Panc1 (cell line): ENCODE measurements at regions of chr11 and their contacts with region 1.

Region 1: DNA sequence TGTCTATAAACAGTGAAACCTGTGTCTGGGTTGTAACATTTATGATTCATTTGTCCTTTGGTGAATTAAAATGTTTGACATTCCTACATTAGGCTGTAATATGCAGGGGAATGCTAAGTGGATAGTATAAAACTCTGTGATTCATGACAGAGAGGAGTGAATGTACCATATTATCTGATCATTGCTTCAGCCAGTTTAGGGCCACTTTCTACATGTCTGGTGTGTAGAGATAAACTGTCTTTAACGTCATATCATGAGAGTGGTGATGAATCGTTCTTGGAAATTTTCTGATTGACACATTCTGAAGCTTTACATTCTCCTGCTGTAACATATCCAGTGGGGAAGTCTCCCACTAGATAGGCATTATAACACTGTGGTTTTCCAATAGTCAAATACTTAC is 427.7 kb downstream of the JRKL start:
- DNase-seq: no peak
- ATAC-seq: no peak
- H3K4me3 ChIP-seq: no peak overlapping the region
- H3K27ac ChIP-seq: no peak overlapping the region
- H3K4me1 ChIP-seq: no peaks in the 10 kb centered on the region
- H3K27me3 ChIP-seq: no peaks in the 10 kb centered on the region
- CTCF ChIP-seq: no peak

Region 2: DNA sequence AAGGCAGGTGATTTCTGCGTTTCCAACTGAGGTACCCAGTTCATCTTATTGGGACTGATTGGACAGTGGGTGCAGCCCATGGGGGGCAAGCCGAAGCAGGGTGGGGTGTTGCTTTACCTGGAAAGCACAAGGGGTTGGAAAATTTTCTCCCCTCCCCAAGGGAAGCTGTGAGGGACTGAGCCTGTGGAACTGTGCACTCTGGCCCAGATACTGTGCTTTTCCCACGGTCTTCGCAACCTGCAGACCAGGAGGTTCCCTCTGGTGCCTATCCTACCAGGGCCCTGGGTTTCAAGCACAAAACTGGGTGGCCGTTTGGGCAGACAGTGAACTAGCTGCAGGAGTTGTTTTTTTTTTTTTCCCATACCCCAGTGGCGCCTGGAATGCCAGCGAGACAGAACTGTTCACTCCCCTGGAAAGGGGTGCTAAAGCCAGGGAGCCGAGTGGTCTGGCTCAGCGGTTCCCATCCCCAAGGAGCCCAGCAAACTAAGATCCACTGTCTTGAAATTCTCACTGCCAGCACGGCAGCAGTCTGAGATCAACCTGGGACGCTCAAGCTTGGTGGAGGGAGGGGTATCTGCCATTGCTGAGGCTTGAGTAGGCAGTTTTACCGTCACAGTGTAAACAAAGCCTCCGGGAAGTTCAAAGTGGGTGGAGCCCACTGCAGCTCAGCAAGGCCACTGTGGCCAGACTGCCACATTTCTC is 330.4 kb before region 1 on chr11:
- CTCF ChIA-PET with region 1: no interaction called
- POLR2A ChIA-PET with region 1: interaction called, 15 read pairs
- in situ Hi-C with region 1: no loop called
- intact Hi-C with region 1: no loop called
- DNase-seq: no peak
- ATAC-seq: no peak
- H3K4me3 ChIP-seq: peak overlapping the region in 1 of 2 experiments; percentile 21; a peak in 2 of 4 replicates
- H3K27ac ChIP-seq: no peak overlapping the region
- H3K4me1 ChIP-seq: no peaks in the 10 kb centered on the region
- H3K27me3 ChIP-seq: no peaks in the 10 kb centered on the region
- CTCF ChIP-seq: no peak

Region 3: DNA sequence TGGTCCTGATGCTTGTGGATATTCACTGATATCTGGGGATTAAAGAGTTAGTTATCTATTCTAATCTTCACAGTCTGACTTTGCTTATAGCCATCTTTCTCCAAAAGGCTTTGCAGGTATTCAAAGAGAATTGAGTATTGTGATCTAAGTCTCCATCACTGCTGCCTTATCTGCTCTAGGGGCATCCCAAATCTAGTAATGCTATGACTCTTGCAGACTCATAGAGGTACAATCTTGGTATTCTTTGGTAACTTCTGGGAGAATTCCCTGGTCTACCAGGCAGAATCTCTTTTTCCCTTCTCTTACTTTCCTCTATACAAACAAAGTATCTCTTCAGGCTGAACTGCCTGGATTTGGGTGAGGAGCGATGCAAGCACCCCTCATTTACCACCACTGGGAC is 318.6 kb after region 1 on chr11:
- CTCF ChIA-PET with region 1: no interaction called
- POLR2A ChIA-PET with region 1: no interaction called
- in situ Hi-C with region 1: no loop called
- intact Hi-C with region 1: no loop called
- DNase-seq: no peak
- ATAC-seq: no peak
- H3K4me3 ChIP-seq: no peak overlapping the region
- H3K27ac ChIP-seq: no peak overlapping the region
- H3K4me1 ChIP-seq: no peaks in the 10 kb centered on the region
- H3K27me3 ChIP-seq: no peaks in the 10 kb centered on the region
- CTCF ChIP-seq: no peak